Esophagus muscularis mucosa (tissue), 4 donors: ENCODE measurements at regions of chr12 and their contacts with region 1.

Region 1: GRCh38 chr12:6470375-6471163 is at the start of gene VAMP1:
- DNase-seq: peak; percentile 100
- H3K4me3 ChIP-seq: peak within 1 kb of the TSS; percentile 60 to 97 (median 84)
- H3K27ac ChIP-seq: peak within 1 kb of the TSS; percentile 87 to 94 (median 88)
- H3K4me1 ChIP-seq: peaks cover 15 to 52% (median 40%) of the 10 kb centered on the region in 4 donors
- H3K27me3 ChIP-seq: no peaks in the 10 kb centered on the region
- CTCF ChIP-seq: no peak
- EP300 ChIP-seq: no peak
- POLR2A ChIP-seq: peak; percentile 97
- total RNA-seq, gene VAMP1: 4.5 to 8.7 (median 6.7) TPM

Region 2: DNA sequence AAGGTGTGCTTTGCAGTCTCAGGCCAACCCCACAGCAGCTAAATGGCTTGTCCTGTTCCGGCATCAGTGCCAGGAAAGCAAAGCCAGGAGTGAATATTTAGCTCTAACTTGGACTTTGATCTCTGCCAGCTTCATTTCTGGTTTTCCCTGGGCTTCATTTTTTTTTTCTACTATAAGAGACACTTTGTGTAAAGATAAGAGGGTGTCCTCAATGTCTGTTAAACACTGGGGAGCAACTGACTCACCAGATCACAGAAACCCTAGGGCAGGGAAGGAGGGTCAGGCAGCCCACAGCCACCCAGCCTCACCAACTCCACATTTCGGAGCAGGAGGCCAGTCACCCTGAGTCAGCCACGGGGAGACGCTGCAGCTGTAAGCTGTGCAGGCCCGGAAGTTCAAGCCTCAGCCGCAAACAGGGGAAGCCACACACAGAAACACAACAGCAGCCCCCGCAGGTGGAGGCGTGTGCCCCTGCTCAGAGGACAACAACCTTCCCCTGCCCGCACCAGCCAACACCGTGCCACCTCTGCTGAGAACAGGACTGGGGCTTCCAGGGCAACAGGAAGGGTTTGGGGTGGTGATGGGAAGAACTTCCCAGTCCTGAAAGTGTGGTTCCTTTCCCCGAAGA is 135.0 kb before region 1 on chr12:
- intact Hi-C with region 1: loop called (anchors 5 kb)
- DNase-seq: peak; percentile 95
- H3K4me3 ChIP-seq: peak overlapping the region; percentile 61 to 92 (median 84)
- H3K27ac ChIP-seq: peak overlapping the region; percentile 93 to 99 (median 97)
- H3K4me1 ChIP-seq: peaks cover 68 to 98% (median 96%) of the 10 kb centered on the region in 4 donors
- H3K27me3 ChIP-seq: no peaks in the 10 kb centered on the region
- CTCF ChIP-seq: peak; percentile 48 to 65 (median 56)
- EP300 ChIP-seq: peak; percentile 3
- POLR2A ChIP-seq: no peak

Region 3: DNA sequence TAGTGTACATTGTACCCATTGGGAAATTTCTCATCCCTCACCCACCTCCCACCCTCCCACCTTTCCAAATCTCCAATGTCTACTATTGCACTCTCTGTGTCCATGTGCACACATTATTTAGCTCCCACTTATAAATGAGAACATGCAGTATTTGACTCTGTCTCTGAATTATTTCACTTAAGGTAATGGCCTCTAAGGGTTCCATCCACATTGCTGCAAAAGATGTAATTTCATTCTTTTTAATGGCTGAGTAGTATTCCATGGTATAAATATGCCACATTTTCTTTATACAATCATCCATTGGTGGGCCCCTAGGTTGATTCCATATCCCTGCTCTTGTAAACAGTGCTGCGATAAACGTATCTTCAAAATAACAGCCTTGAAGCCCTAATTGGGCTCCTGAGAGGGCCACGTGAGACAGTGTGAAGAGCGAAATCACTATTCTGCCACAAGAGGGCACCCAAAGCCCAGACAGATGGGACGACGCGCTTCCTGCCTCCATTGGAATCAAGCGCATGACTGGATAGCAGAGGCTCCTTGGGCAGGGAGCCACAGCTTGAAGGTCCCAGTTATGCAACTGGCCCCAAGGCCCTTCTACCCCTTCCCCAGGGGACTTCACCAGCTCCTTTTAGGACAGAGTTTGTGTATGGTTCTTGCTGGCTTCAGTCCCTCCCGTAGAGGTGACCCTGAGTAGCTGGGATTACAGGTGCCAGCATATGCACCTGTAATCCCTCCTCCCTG is 47.1 kb before region 1 on chr12:
- intact Hi-C with region 1: loop called (anchors 2 kb)
- DNase-seq: no peak
- H3K4me3 ChIP-seq: no peak overlapping the region
- H3K27ac ChIP-seq: peak overlapping the region; percentile 10 to 73 (median 43)
- H3K4me1 ChIP-seq: peaks cover 0 to 24% (median 18%) of the 10 kb centered on the region in 4 donors
- H3K27me3 ChIP-seq: no peaks in the 10 kb centered on the region
- CTCF ChIP-seq: peak; percentile 89 to 97 (median 89)
- EP300 ChIP-seq: no peak
- POLR2A ChIP-seq: no peak